Activated naive CD4-positive, alpha-beta T cell treated with anti-CD3 and anti-CD28 coated beads for 36 hours (primary cell): ENCODE measurements at regions of chr3 and their contacts with region 1.

Region 1: GRCh38 chr3:114504941-114505632 is 211.3 kb downstream of the TIGIT start:
- DNase-seq: peak; percentile 12
- H3K4me3 Mint-ChIP-seq: no peak overlapping the region
- H3K27ac Mint-ChIP-seq: no peak overlapping the region
- H3K4me1 Mint-ChIP-seq: peaks cover 44% of the 10 kb centered on the region
- H3K27me3 Mint-ChIP-seq: peaks cover 17% of the 10 kb centered on the region

Region 2: GRCh38 chr3:114411811-114412803 is 93.0 kb before region 1 on chr3:
- CTCF ChIA-PET with region 1: no interaction called
- intact Hi-C with region 1: loop called (anchors 1 kb)
- DNase-seq: peak; percentile 41
- H3K4me3 Mint-ChIP-seq: no peak overlapping the region
- H3K27ac Mint-ChIP-seq: no peak overlapping the region
- H3K4me1 Mint-ChIP-seq: peaks cover 14% of the 10 kb centered on the region
- H3K27me3 Mint-ChIP-seq: no peaks in the 10 kb centered on the region

Region 3: DNA sequence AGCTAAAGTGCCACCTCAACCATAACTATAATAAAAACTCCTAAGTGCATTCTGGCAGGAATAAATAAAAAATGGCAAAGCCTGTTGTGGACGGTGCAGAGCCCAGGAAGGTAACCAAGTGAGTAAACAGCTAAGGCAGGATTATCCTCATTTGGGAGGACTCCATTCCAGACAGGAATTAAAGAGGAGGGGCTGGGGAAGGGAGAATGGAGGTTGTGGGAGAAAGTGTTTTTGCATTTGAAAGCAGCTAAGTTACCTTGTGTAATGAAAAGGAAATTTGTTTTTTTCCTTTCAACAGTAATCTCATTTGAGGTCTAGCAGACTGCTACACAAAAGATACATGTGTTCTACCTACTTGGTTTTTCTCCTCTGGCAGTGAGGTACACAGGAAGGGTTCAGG is 37.3 kb after region 1 on chr3:
- CTCF ChIA-PET with region 1: no interaction called
- intact Hi-C with region 1: no loop called
- DNase-seq: no peak
- H3K4me3 Mint-ChIP-seq: no peak overlapping the region
- H3K27ac Mint-ChIP-seq: no peak overlapping the region
- H3K4me1 Mint-ChIP-seq: peaks cover 3% of the 10 kb centered on the region
- H3K27me3 Mint-ChIP-seq: no peaks in the 10 kb centered on the region

Region 4: GRCh38 chr3:114902691-114903101 is 397.6 kb after region 1 on chr3:
- CTCF ChIA-PET with region 1: no interaction called
- intact Hi-C with region 1: no loop called
- DNase-seq: no peak
- H3K4me3 Mint-ChIP-seq: no peak overlapping the region
- H3K27ac Mint-ChIP-seq: no peak overlapping the region
- H3K4me1 Mint-ChIP-seq: peaks cover 10% of the 10 kb centered on the region
- H3K27me3 Mint-ChIP-seq: no peaks in the 10 kb centered on the region